Activated CD4-positive, alpha-beta memory T cell treated with anti-CD3 and anti-CD28 coated beads, Interleukin-2, amount 10 ng/mL, durations not matched to agents 7 days and 5 days (primary cell): ENCODE measurements at regions of chr10 and their contacts with region 1.

Region 1: DNA sequence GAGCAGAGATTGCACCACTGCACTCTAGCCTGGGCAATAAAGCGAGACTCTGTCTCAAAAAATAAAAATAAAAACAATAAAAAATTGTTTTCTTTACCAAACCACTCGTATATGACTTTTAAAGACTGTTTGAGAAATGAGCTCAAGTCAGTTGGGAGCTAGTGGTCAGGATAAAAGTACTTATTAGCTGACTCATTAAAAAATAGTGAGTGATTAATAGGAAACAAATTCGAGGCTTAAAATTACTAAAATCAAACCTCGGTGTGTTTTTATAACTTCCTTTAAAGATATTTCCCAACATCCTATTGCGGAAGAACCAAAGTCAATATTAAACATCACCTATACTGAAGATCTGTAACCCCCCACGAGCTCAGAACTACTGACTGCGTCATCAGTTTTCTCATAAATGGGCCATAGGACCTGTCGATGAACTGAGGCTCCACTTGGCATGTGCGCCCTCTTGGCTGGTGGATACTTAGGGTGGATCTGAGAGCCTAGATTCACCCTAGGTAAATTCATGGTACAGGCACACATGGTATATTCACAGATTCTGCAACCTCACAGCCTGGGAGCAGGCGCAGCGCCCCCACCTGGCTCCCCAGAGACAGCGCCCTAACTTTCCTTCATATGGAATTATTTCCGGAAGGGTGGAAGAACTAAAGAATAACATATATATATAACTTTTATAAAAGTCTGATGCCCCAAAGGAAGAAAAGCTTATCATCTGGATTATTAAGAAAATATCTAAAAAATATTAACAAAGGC is 9.2 kb downstream of the MKI67 start:
- DNase-seq: no peak
- H3K4me3 Mint-ChIP-seq: no peak overlapping the region
- H3K27ac Mint-ChIP-seq: no peak overlapping the region
- H3K4me1 Mint-ChIP-seq: peaks cover 42% of the 10 kb centered on the region
- H3K27me3 Mint-ChIP-seq: no peaks in the 10 kb centered on the region

Region 2: DNA sequence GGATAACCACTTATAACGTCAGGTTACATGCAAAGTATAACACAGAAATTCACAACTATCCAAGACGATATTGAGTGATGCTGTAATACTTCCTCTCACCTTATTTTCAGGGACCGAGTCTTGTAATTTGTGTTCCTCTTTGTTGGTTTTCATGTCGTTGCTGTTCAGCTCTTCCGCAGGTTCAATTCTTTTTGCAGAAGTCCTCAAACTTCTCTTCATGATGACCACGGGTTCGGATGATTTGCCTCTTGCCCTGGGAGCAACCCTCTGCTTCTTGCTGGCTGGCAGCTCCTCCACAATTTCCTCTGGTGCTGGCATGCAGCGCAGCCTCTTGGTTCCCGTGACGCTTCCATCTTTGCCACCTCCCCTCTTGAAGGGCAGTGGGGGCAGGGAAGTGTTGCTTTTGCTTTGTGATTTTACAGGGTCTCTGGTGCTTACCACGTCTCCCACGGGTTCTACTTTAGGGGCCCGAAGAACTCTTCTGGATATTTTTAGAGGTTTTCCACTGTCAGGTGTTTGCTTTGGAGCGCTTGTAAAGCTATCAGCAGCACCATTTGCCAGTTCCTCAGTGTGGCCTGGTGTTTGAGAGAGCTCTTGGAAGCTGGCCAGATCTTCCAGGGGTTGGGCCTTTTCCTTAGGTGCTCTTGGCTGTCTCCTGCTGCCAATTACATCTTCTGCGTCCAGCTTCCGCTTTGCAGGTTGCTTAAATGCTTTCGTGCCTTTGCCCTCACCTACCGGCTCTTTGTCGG is 14.4 kb before region 1 on chr10:
- CTCF ChIA-PET with region 1: interaction called, 11 read pairs
- POLR2A ChIA-PET with region 1: interaction called, 31 read pairs
- DNase-seq: no peak
- H3K4me3 Mint-ChIP-seq: no peak overlapping the region
- H3K27ac Mint-ChIP-seq: peak overlapping the region; percentile 53
- H3K4me1 Mint-ChIP-seq: peaks cover 38% of the 10 kb centered on the region
- H3K27me3 Mint-ChIP-seq: no peaks in the 10 kb centered on the region